Right ventricle myocardium inferior (tissue), 1 donor: ENCODE measurements at regions of chr3 and their contacts with region 1.

Region 1: GRCh38 chr3:186236357-186237020 is 125.5 kb downstream of the DGKG start:
- DNase-seq: no peak
- ATAC-seq: peak; percentile 72

Region 2: GRCh38 chr3:185976977-185977678 is 259.4 kb before region 1 on chr3:
- intact Hi-C with region 1: loop called (anchors 1 kb)
- DNase-seq: peak; percentile 87
- ATAC-seq: peak; percentile 72

Region 3: DNA sequence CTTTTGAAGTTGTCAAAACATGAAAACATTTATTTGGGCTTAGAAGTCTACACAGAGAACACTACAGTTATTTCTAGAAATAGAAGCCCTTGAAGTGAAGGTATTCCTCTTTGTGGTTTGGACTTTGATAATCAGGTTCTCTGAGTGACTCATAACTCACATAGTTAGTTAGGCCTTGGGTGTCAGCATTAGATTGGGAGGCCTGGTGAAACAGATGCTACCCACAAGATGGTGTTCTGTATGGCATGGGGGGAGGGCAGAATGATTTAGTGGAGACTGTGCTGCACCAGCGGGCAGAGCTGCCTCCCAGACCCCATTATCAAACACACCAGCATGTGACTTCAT is 18.7 kb before region 1 on chr3:
- intact Hi-C with region 1: loop called (anchors 2 kb)
- DNase-seq: no peak
- ATAC-seq: peak; percentile 29

Region 4: GRCh38 chr3:186277268-186277909 is 40.9 kb after region 1 on chr3:
- intact Hi-C with region 1: no loop called
- DNase-seq: no peak
- ATAC-seq: no peak